Astrocyte of the cerebellum (primary cell): ENCODE measurements at regions of chr2 and their contacts with region 1.

Region 1: GRCh38 chr2:103218516-103218915 is 456.7 kb downstream of the TMEM182 start:
- DNase-seq: no peak
- H3K4me3 ChIP-seq: no peak overlapping the region
- CTCF ChIP-seq: no peak

Region 2: DNA sequence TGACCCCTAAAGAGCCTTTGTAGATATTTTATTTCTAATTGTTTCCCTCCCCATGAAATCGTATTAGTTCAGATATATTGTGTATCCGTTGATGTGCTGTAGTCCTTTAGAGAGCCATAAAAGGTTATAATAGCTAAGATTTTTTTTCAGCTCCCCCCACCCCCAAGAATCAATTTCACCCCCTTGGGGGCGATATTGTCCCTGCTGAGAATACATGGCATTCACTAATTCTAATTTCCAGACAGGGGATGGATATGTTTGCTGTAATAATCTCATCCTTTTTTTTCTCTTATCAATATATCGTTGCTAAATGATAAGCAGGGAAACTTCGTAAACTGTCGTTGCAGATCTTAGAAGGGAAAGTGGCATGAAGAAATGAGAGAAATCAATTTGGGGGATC is 74.1 kb after region 1 on chr2:
- in situ Hi-C with region 1: loop called (anchors 5 kb)
- DNase-seq: no peak
- H3K4me3 ChIP-seq: no peak overlapping the region
- CTCF ChIP-seq: no peak